ENCODE measurements at regions of chr12 and their contacts with region 1.

Region 1: DNA sequence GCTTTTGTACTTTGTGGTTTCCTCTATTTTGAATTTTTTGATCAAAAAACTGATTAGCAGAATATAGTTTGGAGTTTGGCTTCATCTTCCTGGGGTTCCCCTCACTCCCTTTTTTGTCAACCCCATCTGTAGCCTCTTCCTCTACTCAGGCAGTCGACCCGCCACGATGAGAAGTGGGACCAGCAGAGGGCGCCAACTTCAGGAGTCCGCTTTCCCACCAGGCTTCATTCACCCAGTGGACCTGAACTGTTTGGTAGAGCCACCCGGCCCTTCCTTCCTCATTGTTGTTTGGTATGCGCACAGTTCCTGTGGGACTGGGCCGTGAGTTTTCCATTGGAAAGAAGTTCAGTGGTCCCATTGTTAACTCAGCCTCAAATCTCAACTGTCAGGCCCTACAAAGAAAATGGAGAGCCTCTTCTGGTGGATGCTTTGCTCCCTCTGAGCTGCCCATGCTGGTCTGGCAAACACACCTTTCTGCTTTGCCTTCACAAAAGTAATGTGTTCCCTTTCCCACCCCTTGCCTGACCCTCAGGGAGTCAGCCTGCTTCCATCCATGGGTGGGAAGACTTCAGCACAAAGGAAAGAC is 21.7 kb downstream of the TMBIM6 start:
- DNase-seq: peak; percentile 89
- ATAC-seq: peak; percentile 59
- H3K4me3 Mint-ChIP-seq: peak overlapping the region; percentile 24
- H3K27ac Mint-ChIP-seq: peak overlapping the region; percentile 77
- H3K4me1 Mint-ChIP-seq: peaks cover 62% of the 10 kb centered on the region
- H3K27me3 Mint-ChIP-seq: no peaks in the 10 kb centered on the region

Region 2: DNA sequence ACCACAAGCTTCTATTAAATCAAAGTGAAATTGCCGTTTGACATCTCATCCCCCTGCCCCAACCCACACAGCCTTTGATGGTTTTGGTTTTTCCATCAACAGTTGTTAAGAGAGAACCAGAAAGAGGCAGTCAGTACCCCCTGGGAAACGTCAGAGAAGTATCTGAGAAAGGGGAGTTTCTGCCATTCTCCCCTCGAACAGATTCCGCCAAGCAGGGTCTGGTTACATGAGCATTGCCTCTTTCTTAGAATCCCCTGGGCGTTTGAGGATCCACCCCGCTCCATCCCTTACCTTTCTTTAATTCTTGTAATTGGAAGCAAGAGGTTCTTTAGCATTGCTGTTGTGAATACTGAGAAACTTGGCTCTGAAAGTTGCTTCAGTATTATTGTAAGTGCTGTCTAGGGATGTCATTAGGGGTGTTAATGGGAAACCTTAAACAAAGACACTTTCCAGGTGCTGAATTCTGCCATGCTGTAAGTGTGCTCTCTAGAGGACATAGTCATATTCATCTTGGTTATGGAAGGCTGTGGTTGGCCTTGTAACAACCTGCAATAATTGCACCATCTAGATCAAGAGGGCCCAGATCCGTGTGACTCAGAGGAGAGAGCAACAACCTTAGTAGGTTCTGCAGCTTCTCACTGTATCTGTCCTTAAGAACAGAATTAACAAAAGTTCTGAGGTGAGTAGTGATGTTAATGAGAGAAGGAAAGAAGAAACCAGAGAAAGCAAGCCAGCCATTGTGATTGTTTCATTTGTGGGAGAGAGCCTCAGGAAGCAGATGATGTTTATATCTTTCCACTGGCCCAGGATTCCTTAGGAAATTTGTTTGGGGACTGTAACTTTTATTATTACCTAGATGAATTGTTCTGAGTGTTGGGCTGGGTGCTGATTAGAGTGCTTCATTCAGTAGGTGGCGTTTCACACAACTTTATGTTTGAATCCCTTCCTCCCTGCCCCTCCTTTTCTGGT is 12.8 kb before region 1 on chr12:
- CTCF ChIA-PET with region 1: interaction called, 21 read pairs
- POLR2A ChIA-PET with region 1: interaction called, 3 read pairs
- intact Hi-C with region 1: loop called (anchors 1 kb)
- DNase-seq: peak; percentile 81
- ATAC-seq: peak; percentile 87
- H3K4me3 Mint-ChIP-seq: peak overlapping the region; percentile 69
- H3K27ac Mint-ChIP-seq: peak overlapping the region; percentile 98
- H3K4me1 Mint-ChIP-seq: peaks cover 87% of the 10 kb centered on the region
- H3K27me3 Mint-ChIP-seq: no peaks in the 10 kb centered on the region

Region 3: GRCh38 chr12:49796606-49797448 is 33.7 kb after region 1 on chr12:
- CTCF ChIA-PET with region 1: interaction called, 3 read pairs
- POLR2A ChIA-PET with region 1: interaction called, 11 read pairs
- intact Hi-C with region 1: no loop called
- DNase-seq: no peak
- ATAC-seq: no peak
- H3K4me3 Mint-ChIP-seq: no peak overlapping the region
- H3K27ac Mint-ChIP-seq: no peak overlapping the region
- H3K4me1 Mint-ChIP-seq: no peaks in the 10 kb centered on the region
- H3K27me3 Mint-ChIP-seq: no peaks in the 10 kb centered on the region

Measured in activated CD4-positive, alpha-beta T cell treated with anti-CD3 and anti-CD28 coated beads for 36 hours (primary cell).